Left ventricle myocardium superior (tissue), 1 donor: ENCODE measurements at regions of chr9 and their contacts with region 1.

Region 1: DNA sequence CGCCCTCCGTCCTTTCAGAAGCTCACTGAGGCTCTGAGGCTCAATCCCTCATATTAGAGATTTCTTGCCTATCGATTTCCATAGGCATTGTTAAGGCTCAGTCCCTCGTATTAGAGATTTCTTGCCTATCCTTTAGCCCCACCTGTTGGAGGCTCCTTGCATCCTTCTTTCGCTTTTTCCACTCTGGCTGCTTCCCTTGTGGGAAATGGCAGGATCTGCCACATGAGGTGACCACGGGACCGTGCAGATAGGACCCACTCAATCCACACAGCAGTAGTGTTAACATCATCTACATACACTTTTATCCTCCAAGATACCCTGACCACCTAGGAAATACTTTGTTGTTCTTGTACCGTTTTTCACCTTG is 19.5 kb downstream of the IFT74 start:
- DNase-seq: no peak
- ATAC-seq: peak; percentile 64

Region 2: DNA sequence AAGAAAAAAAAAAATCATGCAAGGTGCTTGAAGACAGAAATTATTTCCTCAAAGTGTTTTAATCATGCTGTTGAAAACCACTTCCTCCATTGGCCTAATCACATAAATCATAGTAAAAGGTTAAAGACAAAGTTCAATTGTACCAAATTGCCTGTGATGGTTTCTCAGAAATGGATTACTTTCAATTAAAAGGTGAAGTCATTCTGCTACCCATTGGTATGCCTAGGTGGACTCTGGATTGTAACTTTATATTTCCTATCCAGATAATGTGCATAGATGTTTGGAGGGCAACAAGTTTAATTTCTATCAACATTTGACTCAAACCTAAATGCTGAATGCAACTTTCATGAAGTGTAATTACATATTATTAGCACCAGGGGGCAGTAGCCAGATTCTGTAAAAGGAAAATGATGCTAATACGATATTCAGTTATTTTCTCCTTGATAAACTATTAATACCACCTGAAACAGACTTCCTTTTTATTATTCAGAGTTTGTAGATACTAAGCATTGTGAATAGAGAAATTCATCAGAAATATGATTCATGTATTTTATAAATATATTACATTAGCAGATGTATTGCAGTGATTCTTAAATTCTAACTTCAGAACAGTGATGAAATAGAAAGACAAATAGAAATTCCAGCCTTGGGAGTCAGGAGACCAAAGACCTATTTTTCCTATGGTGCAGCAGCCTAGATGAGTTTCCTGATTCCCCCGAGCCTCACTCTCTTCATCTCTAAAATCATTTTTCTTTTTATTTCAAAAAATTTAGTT is 231.3 kb before region 1 on chr9:
- intact Hi-C with region 1: loop called (anchors 5 kb)
- DNase-seq: no peak
- ATAC-seq: no peak